Ascending aorta (tissue), 2 donors: ENCODE measurements at regions of chr20 and their contacts with region 1.

Region 1: DNA sequence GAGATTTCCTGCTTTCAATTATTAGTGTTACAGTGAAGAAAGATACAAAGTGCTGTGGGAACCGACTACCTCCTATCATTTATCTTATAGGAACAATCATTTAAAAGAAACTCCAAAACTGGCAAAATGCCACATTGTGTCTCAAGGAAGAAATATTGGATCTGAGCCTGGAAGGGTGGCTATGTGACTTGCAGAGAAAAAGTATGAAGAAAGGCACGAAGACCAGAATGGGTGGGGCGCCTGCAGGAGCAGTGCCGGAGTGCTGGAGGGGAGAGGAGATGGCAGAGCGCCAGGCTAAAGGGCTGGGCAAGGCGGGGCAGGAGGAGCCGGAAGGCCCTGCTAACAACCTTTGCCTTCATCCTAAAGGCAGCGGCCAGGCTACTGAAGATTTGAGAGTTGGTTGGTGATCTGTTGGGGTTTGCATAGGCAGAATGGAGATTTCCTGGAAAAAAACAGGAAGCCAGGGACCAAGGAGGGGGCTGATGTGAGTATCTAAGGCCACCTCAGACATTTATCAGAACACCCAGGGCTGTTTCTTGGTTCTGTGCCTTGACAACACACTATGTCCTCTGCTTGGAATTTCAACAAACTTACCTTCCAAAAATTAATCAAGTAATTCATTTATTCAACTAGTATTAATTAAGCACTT is 125.6 kb downstream of the MAFB start:
- DNase-seq: no peak
- H3K4me3 ChIP-seq: no peak overlapping the region
- H3K27ac ChIP-seq: no peak overlapping the region
- H3K4me1 ChIP-seq: peaks cover 0 to 13% of the 10 kb centered on the region in 2 donors
- H3K27me3 ChIP-seq: no peaks in the 10 kb centered on the region
- CTCF ChIP-seq: no peak

Region 2: DNA sequence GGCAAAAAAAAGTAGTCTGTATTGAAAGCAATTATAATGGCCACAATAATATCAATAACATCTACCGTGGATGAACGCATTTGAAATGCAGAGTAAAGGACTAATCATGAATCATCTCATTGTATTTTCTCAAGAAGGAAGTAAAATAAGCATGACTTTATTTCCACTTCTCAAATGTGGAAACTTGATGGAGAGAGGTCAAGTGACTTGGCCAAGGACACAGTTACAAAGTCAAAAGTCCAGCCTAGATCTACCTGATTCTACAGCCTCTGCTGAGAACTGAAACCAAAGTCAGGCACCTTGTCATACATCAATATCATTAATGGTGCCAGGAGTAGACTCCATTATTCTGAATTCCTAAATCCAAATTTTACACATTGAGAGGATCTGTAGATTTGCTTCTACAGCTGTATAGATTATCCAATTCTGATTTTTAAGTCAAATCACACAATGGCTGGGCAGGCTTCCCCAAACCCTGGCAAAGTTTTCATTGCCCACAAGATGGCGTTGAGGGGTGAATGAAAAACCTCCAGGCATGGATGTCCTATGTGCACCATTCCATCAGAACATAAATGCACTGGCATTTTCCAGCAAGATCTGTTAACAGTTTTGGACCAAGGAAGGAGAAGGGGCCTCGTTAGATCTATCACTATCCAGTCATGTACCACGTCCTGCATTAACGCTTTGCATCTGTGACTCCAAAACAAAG is 297.4 kb before region 1 on chr20:
- intact Hi-C with region 1: loop called (anchors 10 kb)
- DNase-seq: no peak
- H3K4me3 ChIP-seq: no peak overlapping the region
- H3K27ac ChIP-seq: no peak overlapping the region
- H3K4me1 ChIP-seq: no peaks in the 10 kb centered on the region
- H3K27me3 ChIP-seq: no peaks in the 10 kb centered on the region
- CTCF ChIP-seq: peak; percentile 33 to 60 (median 44)

Region 3: GRCh38 chr20:40763646-40764295 is 200.4 kb after region 1 on chr20:
- intact Hi-C with region 1: loop called (anchors 5 kb)
- DNase-seq: peak in 1 of 2 donors; percentile 85
- H3K4me3 ChIP-seq: no peak overlapping the region
- H3K27ac ChIP-seq: peak overlapping the region; percentile 8 to 49
- H3K4me1 ChIP-seq: peaks cover 6 to 26% of the 10 kb centered on the region in 2 donors
- H3K27me3 ChIP-seq: no peaks in the 10 kb centered on the region
- CTCF ChIP-seq: no peak